Ovary (tissue), 10 donors: ENCODE measurements at regions of chr17 and their contacts with region 1.

Region 1: GRCh38 chr17:8162233-8162996 is at the start of gene VAMP2:
- DNase-seq: peak; percentile 83 to 93 (median 88)
- H3K4me3 ChIP-seq: peak within 1 kb of the TSS; percentile 77
- H3K27ac ChIP-seq: peak within 1 kb of the TSS; percentile 99 to 100
- H3K4me1 ChIP-seq: peaks cover 16% of the 10 kb centered on the region
- H3K27me3 ChIP-seq: no peaks in the 10 kb centered on the region
- CTCF ChIP-seq: peak in 2 of 3 donors; percentile 17 to 23
- EP300 ChIP-seq: no peak
- POLR2A ChIP-seq: peak; percentile 95
- total RNA-seq, gene VAMP2: 35.5 to 147 (median 118) TPM

Region 2: DNA sequence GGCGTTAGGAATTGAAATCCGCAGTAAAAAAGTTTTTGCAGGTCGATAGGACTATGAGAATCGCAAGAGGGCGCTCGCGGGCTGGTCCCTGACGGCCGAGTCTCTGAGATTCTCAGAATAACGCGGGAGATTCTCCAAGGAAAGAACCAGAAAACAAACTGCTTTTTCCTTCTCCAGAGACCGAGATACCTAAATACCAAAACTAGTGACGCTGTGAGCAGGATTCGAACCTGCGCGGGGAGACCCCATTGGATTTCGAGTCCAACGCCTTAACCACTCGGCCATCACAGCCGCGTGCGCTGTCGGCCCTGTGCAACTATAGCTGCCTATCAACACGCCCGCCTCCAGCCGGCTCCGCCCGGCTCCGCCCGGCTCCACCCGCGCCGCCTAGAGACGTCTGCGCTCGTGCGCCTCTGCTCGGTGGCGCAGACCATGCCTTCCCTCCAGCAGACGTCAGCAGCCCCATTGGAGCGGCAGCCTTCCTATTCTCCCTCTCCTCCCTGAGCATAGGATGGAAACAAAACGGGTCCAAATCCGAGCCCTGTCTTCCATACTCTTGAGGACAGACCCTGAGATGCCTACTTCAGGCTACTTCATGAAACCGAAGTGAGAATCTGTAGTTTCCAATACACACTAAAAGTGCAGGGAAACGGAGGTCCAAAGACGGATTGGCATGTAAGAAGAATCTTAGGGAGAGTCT is 23.6 kb before region 1 on chr17:
- intact Hi-C with region 1: loop called in 1 of 4 experiments (anchors 2 kb)
- DNase-seq: peak; percentile 93 to 98 (median 96)
- H3K4me3 ChIP-seq: peak overlapping the region; percentile 0
- H3K27ac ChIP-seq: peak overlapping the region; percentile 49 to 84
- H3K4me1 ChIP-seq: no peaks in the 10 kb centered on the region
- H3K27me3 ChIP-seq: no peaks in the 10 kb centered on the region
- CTCF ChIP-seq: peak; percentile 90 to 96 (median 95)
- EP300 ChIP-seq: no peak
- POLR2A ChIP-seq: peak; percentile 38

Region 3: DNA sequence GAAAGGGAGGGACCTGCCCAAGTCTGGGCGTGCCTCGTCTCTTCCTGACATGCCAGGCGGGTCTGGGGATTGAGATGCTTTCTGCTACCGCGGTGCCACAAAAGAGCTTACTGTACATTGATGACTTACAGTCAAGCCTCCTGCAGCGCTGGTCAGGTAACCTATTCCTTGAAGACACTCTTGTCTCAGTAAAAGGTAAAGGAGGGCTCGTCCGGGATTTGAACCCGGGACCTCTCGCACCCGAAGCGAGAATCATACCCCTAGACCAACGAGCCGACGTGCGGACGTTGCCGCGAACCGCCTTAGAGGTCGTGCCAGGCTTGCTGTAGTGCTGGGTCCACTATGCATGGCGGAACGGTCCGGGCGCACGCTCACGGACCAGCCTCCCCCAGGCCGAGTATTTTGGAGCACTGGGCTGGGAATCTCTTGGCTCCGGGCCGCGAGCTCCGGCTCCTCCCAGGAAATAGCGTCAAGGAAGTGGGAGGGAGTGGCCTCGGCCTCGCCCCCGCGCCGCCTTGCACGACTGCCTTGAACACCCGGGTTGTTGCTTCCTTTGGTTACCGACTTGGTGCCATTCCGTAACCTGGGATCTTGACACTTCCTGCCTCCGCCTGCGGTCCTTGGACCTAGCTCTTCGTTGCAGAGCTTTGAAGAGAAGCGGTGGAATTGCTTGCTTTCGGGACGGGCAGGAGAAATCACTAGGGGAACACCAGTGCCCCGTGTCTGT is 60.4 kb after region 1 on chr17:
- intact Hi-C with region 1: loop called in 1 of 4 experiments (anchors 2 kb)
- DNase-seq: peak; percentile 96 to 98 (median 97)
- H3K4me3 ChIP-seq: peak overlapping the region; percentile 69
- H3K27ac ChIP-seq: peak overlapping the region; percentile 96
- H3K4me1 ChIP-seq: peaks cover 6% of the 10 kb centered on the region
- H3K27me3 ChIP-seq: no peaks in the 10 kb centered on the region
- CTCF ChIP-seq: no peak
- EP300 ChIP-seq: no peak
- POLR2A ChIP-seq: peak; percentile 84